HEK293 (cell line): ENCODE measurements at regions of chr6 and their contacts with region 1.

Region 1: GRCh38 chr6:112150363-112150762 is 63.0 kb downstream of the FAM229B start:
- H3K4me3 ChIP-seq: no peak overlapping the region
- H3K27ac ChIP-seq: no peak overlapping the region
- H3K4me1 ChIP-seq: no peaks in the 10 kb centered on the region
- CTCF ChIP-seq: no peak

Region 2: GRCh38 chr6:112010328-112010727 is 140.0 kb before region 1 on chr6:
- CTCF ChIA-PET with region 1: no interaction called
- POLR2A ChIA-PET with region 1: no interaction called
- H3K4me3 ChIP-seq: no peak overlapping the region
- H3K27ac ChIP-seq: no peak overlapping the region
- H3K4me1 ChIP-seq: peaks cover 5% of the 10 kb centered on the region
- CTCF ChIP-seq: peak; percentile 33

Region 3: GRCh38 chr6:112117554-112117953 is 32.8 kb before region 1 on chr6:
- CTCF ChIA-PET with region 1: no interaction called
- POLR2A ChIA-PET with region 1: no interaction called
- H3K4me3 ChIP-seq: no peak overlapping the region
- H3K27ac ChIP-seq: no peak overlapping the region
- H3K4me1 ChIP-seq: no peaks in the 10 kb centered on the region
- CTCF ChIP-seq: no peak

Region 4: DNA sequence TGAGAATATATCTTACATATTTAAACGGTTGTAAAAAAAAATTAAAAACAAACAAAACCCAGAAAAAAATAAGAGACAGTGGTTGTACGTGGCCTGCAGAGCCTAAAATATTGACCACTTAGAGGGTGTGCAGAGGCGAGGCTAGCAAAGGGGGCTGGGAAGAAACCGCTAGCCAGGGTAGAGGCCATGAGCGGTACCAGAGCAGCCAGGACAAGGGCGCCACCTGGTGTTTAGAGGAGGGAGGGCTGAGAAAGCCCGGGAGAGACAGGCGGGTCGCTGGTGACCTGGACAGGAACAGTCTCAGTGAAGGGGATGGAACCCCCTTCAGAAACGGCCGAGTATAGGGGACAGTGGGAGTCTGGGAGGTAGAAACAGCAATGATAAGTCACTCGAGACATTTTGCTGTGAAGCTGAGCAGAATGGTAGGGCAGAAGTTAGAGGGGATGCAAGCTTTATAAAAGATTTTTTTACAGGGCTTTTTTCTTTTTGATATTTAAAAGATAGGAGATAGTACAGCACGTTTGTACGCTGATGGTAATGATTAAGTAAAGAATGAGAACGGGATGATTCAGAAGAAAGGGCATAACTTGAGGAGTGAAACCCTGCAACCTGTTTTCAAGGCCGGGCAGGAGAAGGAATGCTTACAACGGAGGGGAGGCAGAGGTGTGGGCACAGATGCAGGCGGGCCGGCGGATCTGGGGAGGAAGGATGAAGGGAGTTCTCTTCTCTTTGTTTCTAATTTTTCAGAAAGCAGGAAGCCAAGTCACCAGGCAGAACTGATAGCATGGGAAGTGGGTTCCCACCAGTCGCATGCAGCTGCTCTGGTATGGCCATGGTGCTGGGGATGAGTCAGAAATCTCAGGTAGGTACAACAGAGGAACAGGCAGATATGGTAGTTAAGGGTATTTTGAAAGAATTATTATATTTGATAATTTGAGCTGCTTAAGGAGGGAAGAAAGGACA is 13.2 kb after region 1 on chr6:
- CTCF ChIA-PET with region 1: interaction called, 14 read pairs
- POLR2A ChIA-PET with region 1: no interaction called
- H3K4me3 ChIP-seq: no peak overlapping the region
- H3K27ac ChIP-seq: no peak overlapping the region
- H3K4me1 ChIP-seq: no peaks in the 10 kb centered on the region
- CTCF ChIP-seq: peak; percentile 36; the same call in 1 of the 2 replicates